ENCODE measurements at regions of chr5 and their contacts with region 1.

Region 1: DNA sequence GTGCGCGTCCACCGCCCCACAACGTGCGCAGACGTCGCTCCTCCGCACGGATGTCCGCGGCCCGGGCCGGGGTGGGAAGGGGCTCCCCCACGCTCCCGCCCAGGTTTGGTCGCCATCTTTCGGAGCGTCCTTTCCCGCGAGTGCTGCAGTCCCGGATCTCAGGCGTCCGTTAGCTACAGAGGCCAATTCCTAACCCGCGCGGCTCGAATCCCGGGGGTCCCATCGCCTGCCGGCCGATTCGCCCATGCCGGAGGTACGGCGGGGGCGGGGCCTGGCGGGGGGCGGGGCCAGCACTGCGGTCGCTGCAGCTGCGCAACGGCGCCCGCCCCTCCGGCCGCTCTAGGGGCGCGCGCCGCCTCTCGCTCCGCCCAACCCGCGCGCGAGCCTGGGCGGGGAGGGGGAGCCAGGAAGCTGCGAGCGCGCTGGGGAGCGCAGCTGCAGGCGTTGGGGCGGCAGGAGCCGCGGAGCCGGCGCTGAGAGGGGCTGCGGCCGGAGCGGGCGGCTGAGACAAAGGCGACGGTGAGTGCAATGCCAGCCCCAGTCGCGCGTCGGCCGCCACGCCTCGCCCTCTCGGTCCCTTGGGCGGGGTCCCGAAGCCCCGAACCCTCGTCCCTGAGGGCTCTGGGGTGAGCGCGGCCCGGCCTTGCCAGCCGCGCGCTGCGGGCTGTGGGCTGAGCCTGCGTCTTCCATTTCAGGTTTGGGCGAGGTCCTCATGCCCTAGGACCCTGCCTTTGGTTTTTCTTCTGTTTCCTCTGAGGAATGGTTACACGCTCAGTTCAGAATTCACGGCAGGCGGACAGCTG is at the start of gene CDC42SE2:
- DNase-seq: peak; percentile 89
- H3K4me3 Mint-ChIP-seq: peak within 1 kb of the TSS; percentile 93
- H3K27ac Mint-ChIP-seq: peak within 1 kb of the TSS; percentile 90
- H3K4me1 Mint-ChIP-seq: peaks cover 51% of the 10 kb centered on the region
- H3K27me3 Mint-ChIP-seq: no peaks in the 10 kb centered on the region
- total RNA-seq, gene CDC42SE2: 163 to 166 TPM

Region 2: DNA sequence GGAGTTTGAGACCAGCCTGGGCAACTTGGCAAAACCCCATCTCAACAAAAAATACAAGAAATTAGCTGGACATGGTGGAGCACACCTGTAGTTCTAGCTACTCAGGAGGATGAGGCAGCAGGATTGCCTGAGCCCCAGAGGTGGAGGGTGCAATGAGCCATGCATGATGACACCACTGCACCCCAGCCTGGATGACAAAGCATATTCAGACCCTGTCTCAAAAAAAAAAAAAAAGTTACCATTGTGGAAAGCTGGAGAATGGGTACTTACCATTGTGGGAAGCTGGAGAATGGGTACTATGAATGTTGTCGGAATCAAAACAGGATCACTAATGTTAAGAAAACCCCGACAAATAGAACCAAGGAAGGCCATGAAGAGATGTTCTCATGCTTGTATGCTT is 124.5 kb before region 1 on chr5:
- CTCF ChIA-PET with region 1: no interaction called
- POLR2A ChIA-PET with region 1: no interaction called
- DNase-seq: no peak
- H3K4me3 Mint-ChIP-seq: no peak overlapping the region
- H3K27ac Mint-ChIP-seq: no peak overlapping the region
- H3K4me1 Mint-ChIP-seq: peaks cover 5% of the 10 kb centered on the region
- H3K27me3 Mint-ChIP-seq: peaks cover 2% of the 10 kb centered on the region

Region 3: DNA sequence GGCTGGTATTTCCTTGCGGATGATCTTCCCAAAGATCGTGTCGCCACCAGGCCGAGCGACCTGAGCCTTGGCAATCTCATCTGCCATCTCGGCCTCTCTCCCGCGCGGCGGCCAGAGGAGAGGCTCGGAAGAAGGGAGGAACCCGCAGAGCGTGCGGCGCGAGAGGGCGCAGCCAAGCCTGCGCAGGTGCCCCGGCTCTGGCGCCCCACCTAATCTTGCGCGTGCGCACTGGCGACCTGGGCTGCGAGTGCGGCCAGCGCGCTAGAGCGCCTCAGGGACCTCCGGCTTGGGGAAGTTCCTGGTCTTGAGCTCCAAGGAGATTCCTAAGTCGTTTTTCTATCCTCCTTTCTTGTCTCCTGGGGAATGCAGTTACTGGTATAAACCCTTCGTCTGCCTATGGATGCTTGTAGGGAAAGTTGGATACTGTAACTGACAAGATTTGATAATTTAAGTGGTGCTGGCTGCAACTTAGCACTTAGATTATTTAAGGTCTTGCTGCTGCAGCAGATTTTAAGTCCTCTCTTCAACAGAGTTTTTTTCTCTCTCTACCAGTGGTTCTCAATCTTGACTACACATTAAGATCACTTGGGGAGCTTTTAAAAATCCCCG is 98.6 kb before region 1 on chr5 and contains the start of gene HINT1:
- CTCF ChIA-PET with region 1: interaction called, 12 read pairs
- POLR2A ChIA-PET with region 1: interaction called, 128 read pairs
- DNase-seq: peak; percentile 94
- H3K4me3 Mint-ChIP-seq: peak within 1 kb of the TSS; percentile 93
- H3K27ac Mint-ChIP-seq: peak within 1 kb of the TSS; percentile 97
- H3K4me1 Mint-ChIP-seq: peaks cover 59% of the 10 kb centered on the region
- H3K27me3 Mint-ChIP-seq: no peaks in the 10 kb centered on the region
- total RNA-seq, gene HINT1: 323 to 329 TPM

Region 4: DNA sequence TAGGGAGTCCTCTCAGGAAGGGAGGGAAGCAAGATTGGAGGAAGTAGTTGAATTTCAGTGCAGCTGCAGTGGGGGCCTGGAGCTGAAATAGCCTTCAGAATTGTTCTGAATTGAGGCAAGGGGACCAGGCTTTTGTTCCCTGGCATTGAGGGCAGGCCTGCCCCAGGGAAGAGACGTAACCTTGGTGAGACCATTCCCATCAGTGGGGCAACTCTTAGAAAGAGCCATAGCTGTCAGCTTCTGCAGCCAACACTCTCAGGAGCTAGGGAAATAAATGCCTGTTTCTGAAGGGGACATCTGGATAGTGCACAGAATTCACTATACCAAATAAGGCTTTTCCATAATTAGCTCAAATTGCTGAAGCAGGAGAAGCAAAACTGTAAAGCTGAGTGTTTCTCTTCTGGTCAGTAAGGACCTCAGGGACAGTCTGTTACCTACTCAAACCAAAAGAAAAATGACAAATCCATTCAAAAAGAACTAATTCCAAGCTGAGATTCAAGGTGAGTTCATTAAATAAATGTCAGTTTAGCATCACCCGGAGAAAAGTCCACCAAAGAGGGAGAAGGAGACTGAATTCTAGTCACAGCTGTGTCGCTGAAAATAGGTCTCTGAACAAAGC is 49.1 kb before region 1 on chr5:
- CTCF ChIA-PET with region 1: interaction called, 7 read pairs
- POLR2A ChIA-PET with region 1: interaction called, 36 read pairs
- DNase-seq: no peak
- H3K4me3 Mint-ChIP-seq: no peak overlapping the region
- H3K27ac Mint-ChIP-seq: no peak overlapping the region
- H3K4me1 Mint-ChIP-seq: peaks cover 52% of the 10 kb centered on the region
- H3K27me3 Mint-ChIP-seq: no peaks in the 10 kb centered on the region

Region 5: DNA sequence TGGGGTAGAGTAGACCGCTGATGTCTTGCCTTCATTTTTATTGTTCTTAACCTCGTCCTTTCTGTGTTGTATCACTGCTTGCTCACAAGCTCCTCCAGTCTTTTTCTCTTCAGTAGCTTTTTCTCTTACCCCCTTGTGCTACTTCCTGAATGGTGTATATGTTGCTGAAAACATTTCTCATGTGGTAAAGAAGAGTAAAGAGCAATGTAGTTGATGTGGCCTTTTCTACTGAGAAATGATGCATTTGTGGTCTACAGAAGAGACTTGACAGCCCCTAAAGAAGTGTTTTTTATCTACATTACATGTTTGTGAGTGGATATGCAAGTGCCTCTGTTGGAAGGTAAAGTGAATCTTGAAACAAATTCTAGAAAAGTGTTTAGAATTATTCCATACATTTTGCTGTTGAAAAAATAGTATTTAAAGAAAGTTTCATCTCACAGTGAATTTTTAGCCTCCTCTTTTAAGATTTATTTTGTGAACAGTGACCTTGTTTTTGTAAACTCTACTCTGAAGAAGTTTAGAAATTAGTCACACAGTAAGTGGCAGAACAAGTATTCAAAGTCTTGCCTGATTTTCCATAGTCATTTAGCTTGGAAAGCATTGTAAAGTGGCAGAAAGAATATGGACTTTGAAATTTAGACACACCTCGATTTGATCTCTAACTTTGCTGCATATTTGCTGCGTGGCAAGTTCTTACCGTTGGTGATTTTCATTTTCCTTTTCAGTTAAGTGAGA is 17.5 kb after region 1 on chr5:
- CTCF ChIA-PET with region 1: interaction called, 34 read pairs
- POLR2A ChIA-PET with region 1: interaction called, 187 read pairs
- DNase-seq: no peak
- H3K4me3 Mint-ChIP-seq: peak overlapping the region; percentile 61
- H3K27ac Mint-ChIP-seq: peak overlapping the region; percentile 87
- H3K4me1 Mint-ChIP-seq: peaks cover 90% of the 10 kb centered on the region
- H3K27me3 Mint-ChIP-seq: no peaks in the 10 kb centered on the region

Region 6: DNA sequence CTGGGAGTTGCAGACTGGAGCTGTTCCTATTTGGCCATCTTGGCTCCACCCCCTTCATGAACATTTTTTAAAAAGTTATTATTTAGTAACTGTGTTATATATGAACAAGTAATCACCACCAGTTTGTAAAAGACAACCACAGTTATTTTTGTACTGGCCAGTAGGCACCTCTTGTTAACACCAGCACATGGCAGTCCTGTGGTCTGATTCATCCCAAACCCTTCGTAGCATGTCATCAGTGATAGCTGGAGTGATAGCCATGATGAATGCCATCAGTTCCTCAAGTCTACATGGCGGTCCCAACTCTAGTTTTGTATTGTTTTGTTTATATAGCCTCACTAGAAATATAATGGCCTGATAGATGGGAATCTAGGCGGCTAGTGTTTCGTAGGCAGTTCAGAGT is 74.2 kb after region 1 on chr5:
- CTCF ChIA-PET with region 1: no interaction called
- POLR2A ChIA-PET with region 1: interaction called, 10 read pairs
- DNase-seq: no peak
- H3K4me3 Mint-ChIP-seq: peak overlapping the region; percentile 75
- H3K27ac Mint-ChIP-seq: peak overlapping the region; percentile 86
- H3K4me1 Mint-ChIP-seq: peaks cover 77% of the 10 kb centered on the region
- H3K27me3 Mint-ChIP-seq: no peaks in the 10 kb centered on the region

Region 7: GRCh38 chr5:131382407-131383395 is 118.9 kb after region 1 on chr5:
- CTCF ChIA-PET with region 1: interaction called, 88 read pairs
- POLR2A ChIA-PET with region 1: interaction called, 234 read pairs
- DNase-seq: peak; percentile 59
- H3K4me3 Mint-ChIP-seq: peak overlapping the region; percentile 53
- H3K27ac Mint-ChIP-seq: peak overlapping the region; percentile 94
- H3K4me1 Mint-ChIP-seq: peaks cover 90% of the 10 kb centered on the region
- H3K27me3 Mint-ChIP-seq: no peaks in the 10 kb centered on the region

Measured in activated CD4-positive, alpha-beta memory T cell treated with anti-CD3 and anti-CD28 coated beads, Interleukin-2, amount 10 ng/mL, durations not matched to agents 7 days and 5 days (primary cell).